ENCODE measurements at regions of chr5 and their contacts with region 1.

Region 1: GRCh38 chr5:178163772-178164735 is 10.4 kb upstream of the NHP2 start:
- DNase-seq: peak; percentile 78
- H3K4me3 ChIP-seq: no peak overlapping the region
- H3K27ac ChIP-seq: no peak overlapping the region
- H3K4me1 ChIP-seq: no peaks in the 10 kb centered on the region
- H3K27me3 ChIP-seq: peaks cover 4% of the 10 kb centered on the region in 2 experiments
- CTCF ChIP-seq: peak; percentile 95 to 99
- POLR2A ChIP-seq: no peak

Region 2: DNA sequence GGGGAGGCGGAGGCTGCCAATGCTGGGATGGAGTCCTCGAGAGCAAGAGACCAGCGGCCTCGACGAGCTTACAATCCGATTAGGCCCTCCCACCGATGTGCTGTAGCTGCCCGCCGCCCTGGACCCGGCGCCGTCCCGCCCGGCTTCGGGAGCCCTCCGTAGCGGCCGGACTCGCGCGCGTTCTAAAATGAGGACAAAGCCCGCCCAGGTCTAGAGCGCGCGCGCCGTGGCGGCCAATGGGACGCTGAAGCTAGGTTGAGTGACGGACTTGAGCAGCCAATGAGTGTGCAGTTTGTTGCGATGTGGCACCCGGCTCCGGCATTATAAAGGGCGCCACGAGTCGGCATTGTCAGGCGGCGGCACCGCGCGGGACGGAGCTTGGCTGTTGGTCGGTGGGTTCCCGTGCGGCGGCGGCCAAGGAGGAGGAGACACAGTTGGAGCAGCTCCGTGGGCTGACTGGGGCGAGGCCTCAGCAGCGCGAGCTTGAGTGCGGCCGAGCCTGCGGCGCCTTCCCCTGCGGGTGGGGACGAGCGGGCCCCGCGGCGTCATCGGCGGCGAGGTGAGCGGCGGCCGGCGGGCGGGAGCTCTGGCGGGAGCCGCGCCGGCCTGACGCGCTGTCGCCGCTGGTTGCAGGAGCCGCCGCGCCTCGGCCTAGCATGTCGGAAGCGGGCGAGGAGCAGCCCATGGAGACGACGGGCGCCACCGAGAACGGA is 40.3 kb after region 1 on chr5 and contains the start of gene HNRNPAB:
- CTCF ChIA-PET with region 1: no interaction called
- POLR2A ChIA-PET with region 1: no interaction called
- dilution Hi-C with region 1: no loop called
- intact Hi-C with region 1: loop called (anchors 2 kb)
- DNase-seq: peak; percentile 96
- H3K4me3 ChIP-seq: peak within 1 kb of the TSS; percentile 66 to 93 (median 81)
- H3K27ac ChIP-seq: peak within 1 kb of the TSS; percentile 65
- H3K4me1 ChIP-seq: peaks cover 22% of the 10 kb centered on the region
- H3K27me3 ChIP-seq: no peaks in the 10 kb centered on the region
- CTCF ChIP-seq: no peak
- POLR2A ChIP-seq: peak; percentile 100
- total RNA-seq, gene HNRNPAB: 309 and 310 TPM in 2 replicates

Measured in endothelial cell of umbilical vein (primary cell).